ENCODE measurements at regions of chr5 and their contacts with region 1.

Region 1: DNA sequence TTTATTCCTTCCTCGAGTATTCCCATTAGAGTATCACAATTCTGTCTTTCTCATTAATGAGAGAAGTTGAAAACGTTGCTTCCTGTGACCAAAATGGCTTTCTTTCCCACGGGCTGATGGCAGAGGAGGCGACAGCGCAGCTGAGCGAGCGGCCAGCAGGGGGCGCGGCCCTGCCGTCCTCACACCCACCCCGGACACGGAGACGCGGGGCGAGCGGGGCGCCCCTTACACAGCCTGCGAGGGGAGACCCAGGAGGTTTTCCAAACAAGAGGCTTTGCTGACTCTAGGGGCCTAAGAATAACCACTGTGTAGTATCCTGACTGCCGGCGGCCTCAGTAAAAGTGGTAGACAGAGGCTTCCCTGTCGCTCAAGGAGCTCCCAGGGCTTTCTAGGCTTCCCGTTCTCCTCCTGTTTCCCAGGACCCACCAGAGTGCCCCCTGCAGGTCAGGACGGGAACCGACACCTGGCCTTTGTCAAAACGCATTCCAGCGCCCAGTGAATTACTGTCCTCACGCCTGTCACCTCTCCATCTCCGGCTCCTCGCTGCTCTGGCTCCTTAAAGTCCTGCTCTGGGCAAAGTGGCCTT is 27.3 kb upstream of the FGF1 start:
- DNase-seq: peak; percentile 84
- H3K4me3 Mint-ChIP-seq: peak overlapping the region; percentile 63
- H3K27ac Mint-ChIP-seq: no peak overlapping the region
- H3K4me1 Mint-ChIP-seq: peaks cover 5% of the 10 kb centered on the region
- H3K27me3 Mint-ChIP-seq: peaks cover 7% of the 10 kb centered on the region

Region 2: DNA sequence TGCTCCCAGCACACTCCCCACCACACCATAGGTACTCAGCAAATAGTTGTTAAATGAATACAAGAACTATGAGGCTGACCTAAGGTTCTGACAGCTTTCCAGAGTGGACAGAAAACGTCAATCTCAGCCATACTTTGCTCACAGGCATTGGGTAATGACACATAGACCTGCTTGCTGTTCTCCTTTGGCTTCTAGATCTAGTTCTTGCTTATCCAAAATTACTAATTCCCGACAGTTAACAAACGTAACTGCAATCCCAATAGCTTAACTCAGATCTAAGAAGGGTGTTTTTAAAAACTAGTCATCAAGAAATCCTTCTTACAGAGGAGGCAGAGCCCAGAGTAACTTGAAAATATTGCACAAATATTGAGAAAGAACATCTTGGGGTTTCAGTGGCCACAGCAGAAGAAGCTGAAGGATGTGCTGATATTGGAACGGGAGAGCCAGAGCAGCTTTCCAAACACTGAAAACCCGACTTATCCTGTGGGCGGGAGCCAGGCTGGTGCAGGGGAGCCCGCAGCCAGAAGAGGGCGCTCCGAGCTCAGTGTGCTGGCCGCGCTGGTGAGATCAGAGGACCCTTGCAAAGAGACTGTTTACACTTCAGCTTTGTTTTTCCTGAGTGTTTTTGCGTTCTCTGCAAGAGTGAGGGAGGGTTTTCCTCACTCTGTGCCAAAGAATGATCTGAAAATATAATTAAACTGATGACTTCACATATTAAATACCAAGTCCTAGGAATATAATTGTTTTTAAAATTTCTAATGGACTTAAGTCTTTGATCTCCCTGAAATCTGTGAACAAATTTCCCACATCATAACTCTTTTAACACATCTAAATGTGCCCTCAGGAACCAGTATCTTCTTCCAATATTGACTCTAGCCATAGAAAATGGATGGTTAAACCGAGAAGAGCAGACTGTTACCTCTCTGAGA is 57.6 kb before region 1 on chr5:
- CTCF ChIA-PET with region 1: interaction called, 14 read pairs
- POLR2A ChIA-PET with region 1: no interaction called
- DNase-seq: peak; percentile 68
- H3K4me3 Mint-ChIP-seq: no peak overlapping the region
- H3K27ac Mint-ChIP-seq: no peak overlapping the region
- H3K4me1 Mint-ChIP-seq: no peaks in the 10 kb centered on the region
- H3K27me3 Mint-ChIP-seq: peaks cover 15% of the 10 kb centered on the region

Region 3: GRCh38 chr5:142726188-142726731 is 13.0 kb after region 1 on chr5:
- CTCF ChIA-PET with region 1: interaction called, 25 read pairs
- POLR2A ChIA-PET with region 1: no interaction called
- DNase-seq: no peak
- H3K4me3 Mint-ChIP-seq: no peak overlapping the region
- H3K27ac Mint-ChIP-seq: no peak overlapping the region
- H3K4me1 Mint-ChIP-seq: peaks cover 10% of the 10 kb centered on the region
- H3K27me3 Mint-ChIP-seq: no peaks in the 10 kb centered on the region

Region 4: GRCh38 chr5:142769741-142770631 is 56.8 kb after region 1 on chr5 and contains the start of gene ARHGAP26:
- CTCF ChIA-PET with region 1: interaction called, 12 read pairs
- POLR2A ChIA-PET with region 1: interaction called, 5 read pairs
- DNase-seq: peak; percentile 94
- H3K4me3 Mint-ChIP-seq: peak within 1 kb of the TSS; percentile 91
- H3K27ac Mint-ChIP-seq: peak within 1 kb of the TSS; percentile 72
- H3K4me1 Mint-ChIP-seq: peaks cover 33% of the 10 kb centered on the region
- H3K27me3 Mint-ChIP-seq: peaks cover 3% of the 10 kb centered on the region
- total RNA-seq, gene ARHGAP26: 14.8 to 17.1 TPM

Region 5: GRCh38 chr5:142874537-142874936 is 161.3 kb after region 1 on chr5:
- CTCF ChIA-PET with region 1: interaction called, 56 read pairs
- POLR2A ChIA-PET with region 1: interaction called, 5 read pairs
- DNase-seq: no peak
- H3K4me3 Mint-ChIP-seq: no peak overlapping the region
- H3K27ac Mint-ChIP-seq: no peak overlapping the region
- H3K4me1 Mint-ChIP-seq: no peaks in the 10 kb centered on the region
- H3K27me3 Mint-ChIP-seq: no peaks in the 10 kb centered on the region

Region 6: GRCh38 chr5:142888469-142889085 is 175.4 kb after region 1 on chr5:
- CTCF ChIA-PET with region 1: interaction called, 60 read pairs
- POLR2A ChIA-PET with region 1: no interaction called
- DNase-seq: no peak
- H3K4me3 Mint-ChIP-seq: no peak overlapping the region
- H3K27ac Mint-ChIP-seq: no peak overlapping the region
- H3K4me1 Mint-ChIP-seq: peaks cover 12% of the 10 kb centered on the region
- H3K27me3 Mint-ChIP-seq: no peaks in the 10 kb centered on the region